ENCODE measurements at regions of chr18 and their contacts with region 1.

Region 1: DNA sequence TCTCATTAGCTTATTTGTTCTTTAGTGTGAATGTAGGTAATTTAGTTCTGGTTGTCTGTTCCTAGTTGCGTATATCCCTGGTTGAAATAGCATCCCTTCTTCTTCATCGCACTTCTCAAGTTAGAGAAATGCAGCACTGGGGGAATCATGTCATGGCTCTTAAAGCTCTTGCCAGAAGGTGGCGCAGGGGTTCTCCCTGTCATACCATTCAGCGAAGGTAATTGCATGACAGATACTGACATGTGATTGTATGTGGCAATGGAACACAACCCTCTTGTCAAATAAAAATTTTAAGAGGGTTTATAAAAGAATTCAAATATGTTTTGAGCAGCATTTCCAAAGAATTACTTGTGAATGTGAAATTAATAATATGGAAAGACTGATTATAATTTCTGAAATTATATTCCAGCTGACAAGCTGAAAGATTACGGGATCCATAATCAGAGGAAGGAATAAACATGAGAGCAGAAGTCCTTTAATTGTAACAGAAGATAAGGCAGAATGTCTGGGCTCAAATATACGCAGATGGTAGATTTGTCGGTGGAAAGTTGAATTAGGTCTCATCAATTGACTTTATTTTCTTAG is 411.7 kb downstream of the DSEL start:
- DNase-seq: peak; percentile 49
- H3K4me3 ChIP-seq: no peak overlapping the region
- H3K27ac ChIP-seq: no peak overlapping the region
- H3K4me1 ChIP-seq: no peaks in the 10 kb centered on the region
- H3K27me3 ChIP-seq: no peaks in the 10 kb centered on the region
- CTCF ChIP-seq: peak; percentile 35 to 59 (median 41)
- EP300 ChIP-seq: no peak
- POLR2A ChIP-seq: no peak

Region 2: DNA sequence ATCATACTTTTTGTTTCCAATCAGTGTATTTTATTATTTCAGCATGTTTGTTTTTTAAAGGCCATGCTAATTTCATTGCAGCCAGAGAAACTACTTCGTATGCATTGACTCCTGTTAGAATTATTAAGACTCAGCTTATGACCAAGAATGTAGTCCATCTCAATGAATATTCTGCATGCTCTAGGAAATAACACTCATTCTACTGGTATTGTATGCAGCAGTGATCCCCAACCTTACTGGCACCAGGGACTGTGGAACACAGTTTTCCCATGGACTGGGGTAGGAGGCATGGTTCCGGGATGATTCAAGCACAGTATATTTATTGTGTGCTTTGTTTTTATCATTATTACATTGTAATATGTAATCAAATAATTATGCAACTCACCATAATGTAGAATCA is 54.9 kb after region 1 on chr18:
- in situ Hi-C with region 1: no loop called
- intact Hi-C with region 1: no loop called
- DNase-seq: no peak
- H3K4me3 ChIP-seq: no peak overlapping the region
- H3K27ac ChIP-seq: no peak overlapping the region
- H3K4me1 ChIP-seq: no peaks in the 10 kb centered on the region
- H3K27me3 ChIP-seq: no peaks in the 10 kb centered on the region
- CTCF ChIP-seq: no peak
- EP300 ChIP-seq: no peak
- POLR2A ChIP-seq: no peak

Region 3: GRCh38 chr18:67199993-67200617 is 95.3 kb after region 1 on chr18:
- in situ Hi-C with region 1: loop called in 1 of 4 experiments (anchors 10 kb)
- intact Hi-C with region 1: no loop called
- DNase-seq: no peak
- H3K4me3 ChIP-seq: no peak overlapping the region
- H3K27ac ChIP-seq: no peak overlapping the region
- H3K4me1 ChIP-seq: no peaks in the 10 kb centered on the region
- H3K27me3 ChIP-seq: no peaks in the 10 kb centered on the region
- CTCF ChIP-seq: peak in 4 of 5 experiments; percentile 40 to 60 (median 54)
- EP300 ChIP-seq: no peak
- POLR2A ChIP-seq: no peak